Upper lobe of right lung (tissue), 1 donor: ENCODE measurements at regions of chr3 and their contacts with region 1.

Region 1: DNA sequence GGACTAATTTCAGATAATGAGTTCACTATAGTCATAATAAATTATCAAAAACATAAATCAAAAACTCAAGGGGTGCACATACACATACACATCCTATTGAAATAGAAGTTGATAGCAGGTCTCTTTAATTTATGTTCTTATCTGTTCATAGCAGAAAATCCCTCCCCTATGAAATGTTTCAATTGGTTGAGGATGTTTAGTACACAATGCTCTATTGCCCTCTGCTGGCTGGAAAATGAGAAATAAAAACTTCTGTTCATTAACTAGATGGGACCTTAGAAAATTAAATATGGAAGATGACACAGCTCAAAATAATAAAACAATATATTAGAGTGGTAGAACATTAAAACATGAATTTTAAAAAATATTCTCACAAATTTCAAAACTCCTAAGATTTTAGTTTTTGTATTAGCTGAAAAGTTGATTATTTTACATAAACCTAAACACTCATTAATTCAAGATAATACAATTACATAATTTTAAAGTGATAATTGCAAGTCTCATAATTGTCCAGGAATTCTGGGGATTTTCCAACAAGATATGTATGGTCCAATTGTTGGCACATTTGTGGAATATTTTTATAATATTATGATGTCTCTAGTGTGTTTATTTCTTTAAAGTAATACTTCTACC is 735.0 kb downstream of the ROBO1 start:
- DNase-seq: no peak
- ATAC-seq: peak; percentile 61
- H3K4me3 ChIP-seq: no peak overlapping the region
- H3K27ac ChIP-seq: no peak overlapping the region
- H3K4me1 ChIP-seq: no peaks in the 10 kb centered on the region
- H3K27me3 ChIP-seq: no peaks in the 10 kb centered on the region
- CTCF ChIP-seq: peak; percentile 61

Region 2: GRCh38 chr3:78659386-78659987 is 373.3 kb before region 1 on chr3:
- intact Hi-C with region 1: loop called (anchors 5 kb)
- DNase-seq: no peak
- ATAC-seq: no peak
- H3K4me3 ChIP-seq: no peak overlapping the region
- H3K27ac ChIP-seq: no peak overlapping the region
- H3K4me1 ChIP-seq: no peaks in the 10 kb centered on the region
- H3K27me3 ChIP-seq: no peaks in the 10 kb centered on the region
- CTCF ChIP-seq: peak; percentile 69